ENCODE measurements at regions of chr4 and their contacts with region 1.

Region 1: GRCh38 chr4:110516106-110516922 is 40.4 kb downstream of the ENPEP start:
- DNase-seq: peak in 2 of 4 donors; percentile 65 to 75
- ATAC-seq: peak; percentile 99
- H3K4me3 ChIP-seq: peak overlapping the region; percentile 21 to 37
- H3K27ac ChIP-seq: peak overlapping the region in 1 of 2 donors; percentile 49
- H3K4me1 ChIP-seq: peaks cover 0 to 3% of the 10 kb centered on the region in 2 donors
- H3K27me3 ChIP-seq: no peaks in the 10 kb centered on the region
- CTCF ChIP-seq: peak; percentile 74 to 80

Region 2: GRCh38 chr4:109879118-109879517 is 637.2 kb before region 1 on chr4:
- intact Hi-C with region 1: no loop called
- DNase-seq: peak in 1 of 4 donors; percentile 54
- ATAC-seq: no peak
- H3K4me3 ChIP-seq: no peak overlapping the region
- H3K27ac ChIP-seq: no peak overlapping the region
- H3K4me1 ChIP-seq: no peaks in the 10 kb centered on the region
- H3K27me3 ChIP-seq: no peaks in the 10 kb centered on the region
- CTCF ChIP-seq: no peak

Region 3: DNA sequence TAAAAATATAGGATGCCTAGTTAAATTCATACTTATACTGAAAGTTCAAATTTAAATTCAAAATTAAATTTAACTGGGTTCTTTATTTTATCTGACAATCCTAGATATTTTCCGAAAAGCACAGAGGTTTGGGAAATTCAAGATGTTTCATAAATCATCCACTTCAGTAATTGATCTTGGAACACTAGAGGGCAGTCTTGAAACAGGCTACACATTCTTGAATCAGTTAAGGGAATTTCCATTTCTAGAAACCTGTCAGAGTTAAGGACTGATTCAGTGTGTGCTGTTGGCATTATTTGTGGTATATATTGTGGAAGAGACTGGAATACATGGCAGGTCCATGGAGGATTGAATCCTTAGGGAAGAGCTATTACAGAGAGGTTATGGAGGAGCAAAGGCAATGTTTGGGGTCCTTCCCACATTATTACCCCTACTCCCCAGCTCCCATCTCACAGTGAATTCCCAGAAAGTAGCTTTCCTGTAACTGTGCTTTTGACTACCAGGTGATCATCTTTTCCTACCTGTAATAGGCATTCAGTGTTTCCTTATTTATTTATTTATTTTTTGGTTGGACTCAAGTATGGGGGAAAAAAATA is 510.8 kb before region 1 on chr4:
- intact Hi-C with region 1: loop called in 1 of 2 experiments (anchors 5 kb)
- DNase-seq: peak in 2 of 4 donors; percentile 61 to 68
- ATAC-seq: peak; percentile 93
- H3K4me3 ChIP-seq: no peak overlapping the region
- H3K27ac ChIP-seq: no peak overlapping the region
- H3K4me1 ChIP-seq: no peaks in the 10 kb centered on the region
- H3K27me3 ChIP-seq: no peaks in the 10 kb centered on the region
- CTCF ChIP-seq: peak; percentile 22 to 64

Measured in left lung (tissue), 14 donors.